ENCODE measurements at regions of chr6 and their contacts with region 1.

Region 1: DNA sequence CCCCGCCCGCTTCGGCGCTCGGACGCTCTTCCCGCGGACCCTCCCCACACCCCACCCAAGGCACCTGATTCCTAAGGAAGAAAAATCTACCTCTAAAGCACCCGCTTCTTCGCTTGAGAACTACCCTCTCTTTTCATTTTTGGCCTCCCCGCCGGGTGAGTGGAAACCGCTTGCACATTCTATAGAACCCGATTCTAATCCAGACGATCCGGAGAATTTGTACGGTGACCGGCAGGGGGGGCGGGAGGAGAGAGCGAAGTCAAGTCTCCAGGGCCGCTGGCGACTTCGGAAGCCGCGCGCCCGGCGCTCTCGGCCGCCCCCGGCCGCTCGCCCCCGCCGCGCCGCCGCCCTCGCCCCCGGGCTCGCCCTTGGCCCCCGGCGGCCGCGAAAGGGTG is at the start of gene RBM24:
- DNase-seq: peak; percentile 52 to 55
- ATAC-seq: peak in 3 of 8 donors; percentile 5 to 26 (median 23)
- H3K4me3 ChIP-seq: peak within 1 kb of the TSS; percentile 56 to 85 (median 82)
- H3K27ac ChIP-seq: peak within 1 kb of the TSS; percentile 79 to 96 (median 90)
- H3K4me1 ChIP-seq: peaks cover 0 to 15% (median 5%) of the 10 kb centered on the region in 9 donors
- H3K27me3 ChIP-seq: peaks cover 0 to 59% (median 3%) of the 10 kb centered on the region in 7 donors
- CTCF ChIP-seq: peak in 4 of 9 donors; percentile 20 to 39 (median 26)
- total RNA-seq, gene RBM24: 149 to 317 (median 194) TPM

Region 2: DNA sequence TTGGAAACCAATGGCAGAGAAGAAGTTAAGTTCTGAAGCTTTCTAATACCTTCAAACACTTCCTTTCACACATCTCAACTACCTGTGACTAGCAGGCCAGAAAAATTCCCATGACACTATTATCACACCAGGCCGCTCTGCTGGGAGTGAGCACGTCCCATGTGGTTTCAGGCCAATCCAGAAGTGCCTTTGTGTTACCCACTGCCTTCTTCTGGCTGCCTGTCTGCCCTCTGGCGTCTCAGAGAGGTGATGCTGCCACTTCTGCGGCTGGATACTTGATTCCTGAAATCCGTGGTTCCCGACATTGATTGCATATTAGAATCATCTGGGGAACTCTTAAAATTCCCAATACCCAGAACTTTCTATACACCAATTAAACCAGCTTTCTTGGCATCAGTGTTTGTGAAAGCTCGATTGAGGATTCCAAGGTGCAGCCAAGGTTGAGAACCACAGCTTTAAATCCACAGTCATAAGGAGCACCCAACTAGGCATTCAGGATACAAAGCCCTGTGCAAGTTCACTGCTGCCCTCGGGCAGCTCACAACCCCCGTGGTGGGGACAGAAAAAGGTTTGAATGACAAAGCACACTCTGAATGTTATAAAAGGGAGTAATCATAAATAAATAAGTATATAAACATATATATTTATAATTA is 113.6 kb before region 1 on chr6:
- intact Hi-C with region 1: loop called in 3 of 10 experiments (anchors 5 to 10 kb)
- DNase-seq: peak; percentile 34 to 55
- ATAC-seq: peak; percentile 67 to 97 (median 89)
- H3K4me3 ChIP-seq: no peak overlapping the region
- H3K27ac ChIP-seq: peak overlapping the region in 4 of 10 donors; percentile 18 to 48 (median 38)
- H3K4me1 ChIP-seq: peaks cover 0 to 6% (median 0%) of the 10 kb centered on the region in 9 donors
- H3K27me3 ChIP-seq: no peaks in the 10 kb centered on the region
- CTCF ChIP-seq: peak in 8 of 9 donors; percentile 33 to 73 (median 50)

Region 3: DNA sequence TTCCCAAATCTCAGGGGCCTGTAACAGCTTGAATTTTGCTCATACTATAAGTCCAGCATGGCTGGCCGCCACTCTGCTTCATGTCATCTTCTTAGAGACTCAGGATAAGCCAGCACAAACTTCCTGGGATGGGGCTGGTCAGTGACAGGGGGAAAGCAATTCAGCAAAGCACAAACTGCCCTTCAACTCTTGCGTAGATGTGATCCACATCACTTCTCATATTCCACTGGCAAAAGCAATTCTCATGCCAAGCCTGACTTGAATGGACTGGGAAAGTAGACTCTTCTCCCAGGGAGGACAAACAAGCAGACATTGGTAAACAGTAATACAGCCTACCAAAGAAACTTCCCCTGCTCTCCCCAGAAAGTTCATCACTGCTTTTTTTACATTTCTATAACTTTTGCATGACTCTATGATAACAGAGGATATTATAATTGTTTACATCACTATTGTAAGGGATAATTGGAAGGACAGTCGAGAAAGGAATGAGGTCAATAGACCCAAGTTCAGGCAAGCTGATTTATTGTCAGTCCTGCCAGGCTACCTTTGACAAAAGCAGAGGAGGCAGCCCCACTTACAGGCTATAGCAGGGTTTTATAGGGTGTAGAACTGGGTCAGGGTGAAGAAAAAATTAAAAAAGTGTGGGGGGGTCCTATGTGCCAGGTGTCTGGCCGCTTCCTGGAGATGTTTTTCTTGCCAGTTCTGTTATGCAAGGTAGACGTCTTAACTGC is 37.5 kb after region 1 on chr6:
- intact Hi-C with region 1: no loop called
- DNase-seq: no peak
- ATAC-seq: peak in 3 of 8 donors; percentile 30 to 47 (median 43)
- H3K4me3 ChIP-seq: no peak overlapping the region
- H3K27ac ChIP-seq: peak overlapping the region in 1 of 10 donors; percentile 9
- H3K4me1 ChIP-seq: no peaks in the 10 kb centered on the region
- H3K27me3 ChIP-seq: no peaks in the 10 kb centered on the region
- CTCF ChIP-seq: no peak

Region 4: DNA sequence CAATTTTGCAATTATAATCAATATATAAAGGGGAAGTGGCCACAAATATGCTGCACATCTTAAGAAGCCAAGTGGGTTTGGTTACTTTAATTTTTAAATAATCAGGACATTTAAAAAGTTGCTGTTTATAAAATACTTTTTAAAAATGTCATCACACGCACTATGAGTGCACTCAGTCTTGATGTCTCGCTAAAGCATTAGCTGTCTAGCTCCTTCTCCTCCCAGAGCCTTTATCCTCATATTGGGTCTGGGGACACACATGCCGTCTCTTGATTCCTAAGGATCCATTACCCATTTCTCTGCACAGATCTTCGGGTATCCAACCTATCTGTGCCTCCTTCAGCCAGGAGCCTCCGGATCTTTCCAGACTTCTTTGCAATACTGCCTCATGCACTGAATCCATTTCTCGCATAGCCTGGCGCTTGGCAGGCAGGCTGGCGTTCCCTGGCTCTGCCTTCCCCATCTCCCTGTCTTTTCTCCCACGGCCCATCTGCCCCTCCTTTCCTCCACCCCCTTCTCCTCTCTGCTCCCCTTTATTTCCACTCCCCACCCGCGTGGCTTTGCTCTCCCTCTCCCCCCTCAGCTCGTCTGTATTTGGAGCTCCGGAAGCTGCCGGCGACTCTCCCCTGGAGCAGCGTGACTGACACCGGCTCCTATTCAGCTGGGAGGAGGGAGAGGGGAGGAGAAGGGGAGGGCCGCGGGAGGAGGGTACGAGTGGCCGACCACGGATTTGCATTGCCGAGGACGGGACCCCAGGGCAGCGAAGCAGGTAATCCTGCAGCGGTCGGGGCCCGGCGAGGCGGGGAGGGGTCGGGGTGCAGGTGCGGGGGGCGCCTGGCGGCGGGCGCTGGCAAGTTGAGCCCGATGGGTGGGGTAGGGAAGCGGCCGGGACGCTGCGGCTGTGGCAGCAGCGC is 112.1 kb after region 1 on chr6 and contains the start of gene CAP2:
- intact Hi-C with region 1: loop called in 2 of 10 experiments (anchors 10 kb)
- DNase-seq: peak; percentile 66 to 76
- ATAC-seq: peak; percentile 83 to 97 (median 94)
- H3K4me3 ChIP-seq: peak within 1 kb of the TSS; percentile 21 to 66 (median 58)
- H3K27ac ChIP-seq: peak within 1 kb of the TSS; percentile 59 to 93 (median 76)
- H3K4me1 ChIP-seq: peaks cover 0 to 15% (median 8%) of the 10 kb centered on the region in 9 donors
- H3K27me3 ChIP-seq: peaks cover 0 to 37% (median 0%) of the 10 kb centered on the region in 7 donors
- CTCF ChIP-seq: no peak
- total RNA-seq, gene CAP2: 116 to 211 (median 172) TPM

Region 5: GRCh38 chr6:17417817-17418216 is 136.7 kb after region 1 on chr6:
- intact Hi-C with region 1: loop called in 2 of 10 experiments (anchors 10 kb)
- DNase-seq: no peak
- ATAC-seq: peak; percentile 5 to 62 (median 27)
- H3K4me3 ChIP-seq: no peak overlapping the region
- H3K27ac ChIP-seq: peak overlapping the region; percentile 34 to 81 (median 73)
- H3K4me1 ChIP-seq: peaks cover 0 to 56% (median 20%) of the 10 kb centered on the region in 9 donors
- H3K27me3 ChIP-seq: no peaks in the 10 kb centered on the region
- CTCF ChIP-seq: no peak

Region 6: DNA sequence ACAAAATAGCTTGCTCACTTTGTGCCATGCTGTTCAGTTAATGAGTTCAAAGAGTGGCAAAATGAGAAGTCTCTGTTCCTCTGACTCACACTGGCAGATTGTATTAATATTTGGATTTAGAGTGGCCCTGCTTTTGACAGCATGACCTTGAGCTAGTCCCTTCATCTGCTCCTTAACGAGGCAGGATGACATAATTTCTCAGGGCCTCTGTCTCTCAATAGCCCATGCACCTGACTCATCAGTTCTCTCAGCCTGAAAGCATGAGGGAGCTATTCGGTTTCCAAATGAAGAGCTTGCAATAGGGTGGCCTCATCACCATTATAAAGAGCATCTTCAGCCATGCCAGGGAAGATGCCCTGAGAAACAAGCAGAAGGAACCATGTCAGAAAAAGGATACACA is 150.5 kb after region 1 on chr6:
- intact Hi-C with region 1: loop called in 1 of 10 experiments (anchors 10 kb)
- DNase-seq: no peak
- ATAC-seq: peak in 3 of 8 donors; percentile 52 to 79 (median 57)
- H3K4me3 ChIP-seq: no peak overlapping the region
- H3K27ac ChIP-seq: peak overlapping the region in 2 of 10 donors; percentile 14 to 49
- H3K4me1 ChIP-seq: peaks cover 0 to 24% (median 0%) of the 10 kb centered on the region in 9 donors
- H3K27me3 ChIP-seq: no peaks in the 10 kb centered on the region
- CTCF ChIP-seq: no peak

Region 7: DNA sequence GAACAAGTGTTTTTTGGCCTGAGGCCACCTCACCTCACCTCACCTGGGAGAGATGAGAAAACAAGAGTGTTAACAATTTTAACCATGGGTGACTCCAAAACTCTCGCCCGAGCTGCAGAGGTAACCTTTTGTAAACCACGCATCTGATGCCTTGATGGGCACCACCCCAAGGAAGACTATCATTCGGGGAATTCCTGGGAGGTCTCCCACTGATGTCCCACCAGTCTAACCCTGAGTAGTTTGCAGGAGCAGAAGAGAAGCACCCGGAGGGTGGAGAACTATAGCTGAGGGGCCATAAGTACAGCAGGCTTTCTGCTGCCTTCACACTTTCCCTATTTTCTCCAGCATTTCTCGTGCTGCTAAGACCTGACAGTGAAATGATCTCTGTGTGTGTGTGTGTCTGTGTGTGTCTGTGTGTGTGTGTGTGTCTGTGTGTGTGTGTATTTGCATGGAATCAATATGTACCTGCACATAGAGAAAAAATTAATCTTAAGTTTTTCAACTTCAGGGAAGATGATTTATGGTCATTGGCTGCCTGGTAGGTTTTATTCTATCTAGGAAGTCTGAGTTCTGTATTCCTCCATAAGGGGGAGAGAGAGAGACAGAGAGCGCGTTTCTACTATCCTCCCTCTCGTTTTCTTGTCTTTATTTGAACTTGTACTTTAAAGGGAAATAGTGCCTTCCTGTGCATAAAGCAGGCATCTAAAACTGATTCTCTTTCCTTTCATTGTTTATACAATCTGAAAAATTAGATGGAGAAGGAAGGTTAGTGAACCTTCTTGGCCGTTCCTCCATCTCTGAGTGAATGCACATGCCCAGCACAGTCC is 188.1 kb after region 1 on chr6:
- intact Hi-C with region 1: loop called in 2 of 10 experiments (anchors 5 to 10 kb)
- DNase-seq: no peak
- ATAC-seq: no peak
- H3K4me3 ChIP-seq: no peak overlapping the region
- H3K27ac ChIP-seq: no peak overlapping the region
- H3K4me1 ChIP-seq: peaks cover 0 to 31% (median 11%) of the 10 kb centered on the region in 9 donors
- H3K27me3 ChIP-seq: no peaks in the 10 kb centered on the region
- CTCF ChIP-seq: peak in 7 of 9 donors; percentile 16 to 49 (median 38)